ENCODE measurements at regions of chr9 and their contacts with region 1.

Region 1: GRCh38 chr9:36102742-36103495 is 33.6 kb upstream of the GLIPR2 start:
- DNase-seq: peak; percentile 76 to 81
- ATAC-seq: peak; percentile 87 to 97 (median 91)
- H3K4me3 ChIP-seq: no peak overlapping the region
- H3K27ac ChIP-seq: no peak overlapping the region
- H3K4me1 ChIP-seq: peaks cover 0 to 8% (median 0%) of the 10 kb centered on the region in 9 donors
- H3K27me3 ChIP-seq: no peaks in the 10 kb centered on the region
- CTCF ChIP-seq: peak; percentile 61 to 89 (median 80)

Region 2: DNA sequence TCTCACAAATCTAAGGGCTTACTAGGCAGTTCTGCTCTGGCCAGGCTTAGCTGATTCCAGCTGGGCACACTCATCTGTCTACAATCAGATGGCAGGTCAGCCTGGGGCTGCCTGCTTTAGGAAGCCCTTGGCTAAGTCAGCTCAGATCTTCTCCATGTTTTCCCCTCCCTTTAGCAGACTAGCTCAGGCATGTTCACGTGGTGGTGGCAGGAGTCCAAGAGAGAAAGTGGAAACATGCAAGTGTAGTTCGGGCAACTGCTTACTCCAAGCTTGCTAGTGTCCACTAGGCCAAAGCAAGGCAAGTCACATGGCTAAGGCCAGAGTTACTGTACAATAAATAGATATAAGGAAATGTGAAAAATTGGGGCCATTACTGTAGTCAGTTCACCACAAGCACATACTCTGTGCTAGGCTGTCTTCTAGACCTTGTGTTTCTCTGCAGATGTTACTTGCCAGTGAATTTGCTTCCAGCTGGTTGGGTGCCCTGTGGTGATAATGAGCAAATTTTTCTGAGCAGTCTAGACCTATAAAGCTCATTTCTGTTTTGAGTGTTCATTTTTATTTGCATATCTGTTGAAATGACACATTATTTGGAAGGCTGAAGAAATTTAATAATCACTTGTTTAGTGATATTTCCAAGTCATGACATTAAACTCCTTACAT is 27.9 kb before region 1 on chr9:
- intact Hi-C with region 1: no loop called
- DNase-seq: peak; percentile 44 to 90
- ATAC-seq: peak; percentile 91 to 97 (median 92)
- H3K4me3 ChIP-seq: no peak overlapping the region
- H3K27ac ChIP-seq: peak overlapping the region in 7 of 10 donors; percentile 5 to 61 (median 42)
- H3K4me1 ChIP-seq: peaks cover 0 to 21% (median 12%) of the 10 kb centered on the region in 9 donors
- H3K27me3 ChIP-seq: no peaks in the 10 kb centered on the region
- CTCF ChIP-seq: no peak

Region 3: DNA sequence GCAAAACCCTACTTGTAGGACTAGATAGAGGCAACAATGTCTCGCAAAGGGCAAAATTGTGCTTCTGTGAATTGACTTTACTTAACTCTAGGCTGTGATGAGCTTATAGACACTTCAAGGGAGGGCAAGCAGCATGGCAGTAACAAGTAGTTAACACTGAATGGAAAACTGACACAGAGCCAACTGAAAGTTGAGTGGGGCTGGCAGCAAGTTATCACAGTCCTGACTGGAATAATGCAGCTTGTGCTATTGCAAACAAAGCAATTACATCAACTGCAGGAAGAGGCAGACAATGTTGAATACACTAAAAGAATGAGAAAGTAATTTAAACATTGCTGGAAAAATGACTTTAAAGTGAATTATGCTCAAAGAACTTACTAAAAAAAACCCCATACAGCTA is 234.9 kb after region 1 on chr9:
- intact Hi-C with region 1: loop called in 1 of 10 experiments (anchors 10 kb)
- DNase-seq: peak in 1 of 2 donors; percentile 74
- ATAC-seq: peak; percentile 67 to 97 (median 94)
- H3K4me3 ChIP-seq: no peak overlapping the region
- H3K27ac ChIP-seq: peak overlapping the region in 8 of 10 donors; percentile 6 to 61 (median 42)
- H3K4me1 ChIP-seq: peaks cover 0 to 16% (median 0%) of the 10 kb centered on the region in 9 donors
- H3K27me3 ChIP-seq: no peaks in the 10 kb centered on the region
- CTCF ChIP-seq: no peak